Head of caudate nucleus (tissue), 42 donors: ENCODE measurements at regions of chr2 and their contacts with region 1.

Region 1: DNA sequence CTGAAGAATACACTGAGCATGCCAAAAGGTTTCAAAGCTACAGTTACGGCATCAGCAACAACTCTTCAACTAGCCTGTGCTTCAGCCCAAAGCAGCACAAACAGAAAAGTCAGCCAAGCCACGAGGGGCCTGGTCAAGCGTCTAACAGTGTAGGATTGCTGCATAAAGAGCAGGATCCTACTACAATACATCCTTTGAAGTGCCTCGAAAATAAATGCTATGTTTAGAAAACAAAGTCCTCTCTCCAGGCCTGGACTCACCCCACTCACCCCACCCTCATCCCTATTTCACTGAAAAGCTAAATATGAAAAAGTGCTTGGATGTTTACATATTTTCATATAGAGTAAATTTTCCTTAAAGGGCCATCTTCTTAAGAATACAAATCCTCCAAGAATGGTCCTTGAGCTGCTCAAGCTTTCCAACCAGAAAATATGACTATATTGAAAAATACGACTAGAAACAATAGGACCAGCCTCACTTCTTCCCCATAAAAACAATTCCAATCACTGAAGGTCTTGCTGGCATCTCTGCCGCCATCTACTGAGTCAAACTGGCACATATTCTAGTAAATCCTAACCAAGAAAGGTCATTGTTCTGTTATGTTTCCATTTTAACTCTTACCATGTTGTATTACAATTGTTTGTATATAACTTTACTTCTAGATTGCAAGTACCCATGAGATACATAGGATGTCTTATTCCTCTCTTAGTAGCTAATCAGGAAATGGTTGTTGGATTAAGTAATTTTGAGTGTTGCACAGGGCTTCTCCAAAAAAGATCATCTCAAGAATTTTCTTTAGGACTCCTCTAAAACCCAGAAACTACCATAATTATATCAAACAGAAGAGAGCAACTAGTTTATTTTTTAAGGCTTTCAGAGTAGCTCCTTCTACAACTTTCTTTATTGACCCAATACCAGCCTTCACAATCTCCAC is 63.6 kb downstream of the CLHC1 start:
- DNase-seq: peak; percentile 51 to 92 (median 80)

Region 2: GRCh38 chr2:54723131-54723995 is 445.1 kb before region 1 on chr2 and contains the start of gene EML6:
- intact Hi-C with region 1: loop called (anchors 10 kb)
- DNase-seq: peak; percentile 94 to 100 (median 99)

Region 3: DNA sequence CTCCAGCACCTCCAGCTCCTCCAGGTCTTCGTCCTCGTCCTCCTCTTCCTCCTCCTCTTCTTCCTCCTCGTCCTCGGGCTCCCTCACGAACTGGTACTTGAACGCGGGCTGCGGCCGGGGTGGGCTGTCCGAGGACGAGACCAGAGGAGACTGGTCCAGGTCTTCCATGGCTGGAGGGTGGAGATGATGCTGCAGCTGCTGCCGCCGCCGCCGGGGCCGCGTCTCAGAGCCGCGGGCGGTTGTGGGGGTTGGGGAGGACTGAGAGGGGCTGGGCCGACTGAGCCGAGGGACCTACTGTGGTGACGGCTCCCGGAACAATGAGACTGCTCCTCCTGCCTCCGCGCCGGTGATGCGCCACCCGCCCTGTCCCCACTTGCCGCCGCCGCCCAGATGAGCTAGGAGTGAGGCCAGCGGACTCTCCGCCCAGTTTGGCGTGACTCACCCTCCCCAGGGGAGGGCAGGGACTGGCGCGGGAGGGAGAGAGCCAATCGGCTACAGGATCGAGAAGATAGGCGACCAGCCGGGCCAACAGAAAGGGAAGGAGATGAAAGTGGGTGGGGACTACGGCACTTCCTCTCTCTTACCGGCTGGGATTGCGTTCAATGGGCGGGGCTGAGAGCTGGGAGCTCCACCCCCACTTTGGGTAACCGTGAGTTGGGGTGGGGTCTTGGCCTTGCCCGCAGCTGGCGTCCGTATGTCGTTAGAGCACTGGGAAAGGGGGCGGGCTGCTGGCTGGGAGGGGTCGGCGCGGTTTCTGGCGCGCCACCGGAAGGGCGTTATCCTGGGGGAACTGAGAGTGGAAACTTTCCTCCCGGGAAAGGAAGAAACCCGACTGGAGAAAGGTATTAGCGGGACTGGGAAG is 118.1 kb before region 1 on chr2 and contains the start of gene RTN4:
- intact Hi-C with region 1: loop called (anchors 2 kb)
- DNase-seq: peak; percentile 95 to 100 (median 99)

Region 4: DNA sequence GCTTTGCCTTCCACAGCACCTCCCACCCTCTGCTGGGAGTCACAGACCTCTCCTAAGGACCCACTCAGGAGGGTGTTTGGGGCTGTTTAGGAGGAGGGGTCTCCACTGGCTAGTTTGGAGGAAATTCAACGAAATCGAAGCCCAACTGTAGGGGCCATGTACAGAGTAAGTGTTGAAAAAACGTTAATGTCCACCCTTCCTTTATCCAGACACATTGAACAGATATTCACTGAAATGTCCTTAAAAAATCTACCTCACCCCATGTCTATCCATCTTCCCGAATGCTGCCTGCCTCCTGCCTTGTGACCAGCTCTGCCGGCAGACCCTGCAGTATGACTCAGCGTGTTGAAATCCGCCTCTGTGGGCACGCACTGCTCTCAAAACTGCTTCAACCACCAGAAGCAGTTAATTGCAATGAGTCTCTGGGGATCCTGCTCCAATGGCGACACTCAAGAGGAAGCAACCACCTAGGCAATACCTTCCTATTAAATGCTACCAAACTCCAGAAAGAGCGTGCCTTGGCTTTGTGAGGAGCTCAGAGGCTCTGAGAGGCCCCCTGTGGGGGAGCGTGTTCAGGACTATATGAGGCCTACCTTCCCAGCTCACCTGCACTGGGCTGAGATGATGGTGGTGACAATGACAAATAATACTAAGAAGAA is 56.8 kb before region 1 on chr2:
- intact Hi-C with region 1: loop called (anchors 5 kb)
- DNase-seq: peak in 41 of 42 donors; percentile 39 to 88 (median 68)

Region 5: DNA sequence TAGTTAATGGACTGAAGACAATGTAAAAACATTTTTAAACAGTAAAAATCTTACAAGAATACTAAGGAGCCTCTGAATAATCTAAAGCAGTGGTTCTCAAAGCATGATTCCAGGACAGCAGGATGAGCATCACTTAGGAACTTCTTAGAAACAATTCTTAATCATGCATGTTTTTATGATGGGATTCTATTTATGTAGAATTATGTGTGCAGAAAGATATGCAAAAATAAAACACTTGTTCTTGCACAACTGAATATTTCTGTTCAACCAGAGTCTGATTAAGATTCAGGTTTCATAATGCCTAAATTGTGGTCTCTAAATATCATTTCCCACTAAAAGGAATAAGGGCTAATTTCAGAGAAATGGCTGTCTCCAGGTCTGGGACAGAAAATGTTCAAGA is 169.8 kb after region 1 on chr2:
- intact Hi-C with region 1: no loop called
- DNase-seq: no peak